GM10248 (cell line): ENCODE measurements at regions of chr14 and their contacts with region 1.

Region 1: GRCh38 chr14:20690848-20691523 is 2.4 kb downstream of the ANG start:
- DNase-seq: peak; percentile 69
- CTCF ChIP-seq: peak; percentile 76

Region 2: GRCh38 chr14:20568393-20568792 is 122.6 kb before region 1 on chr14:
- CTCF ChIA-PET with region 1: no interaction called
- POLR2A ChIA-PET with region 1: no interaction called
- DNase-seq: no peak
- CTCF ChIP-seq: no peak

Region 3: DNA sequence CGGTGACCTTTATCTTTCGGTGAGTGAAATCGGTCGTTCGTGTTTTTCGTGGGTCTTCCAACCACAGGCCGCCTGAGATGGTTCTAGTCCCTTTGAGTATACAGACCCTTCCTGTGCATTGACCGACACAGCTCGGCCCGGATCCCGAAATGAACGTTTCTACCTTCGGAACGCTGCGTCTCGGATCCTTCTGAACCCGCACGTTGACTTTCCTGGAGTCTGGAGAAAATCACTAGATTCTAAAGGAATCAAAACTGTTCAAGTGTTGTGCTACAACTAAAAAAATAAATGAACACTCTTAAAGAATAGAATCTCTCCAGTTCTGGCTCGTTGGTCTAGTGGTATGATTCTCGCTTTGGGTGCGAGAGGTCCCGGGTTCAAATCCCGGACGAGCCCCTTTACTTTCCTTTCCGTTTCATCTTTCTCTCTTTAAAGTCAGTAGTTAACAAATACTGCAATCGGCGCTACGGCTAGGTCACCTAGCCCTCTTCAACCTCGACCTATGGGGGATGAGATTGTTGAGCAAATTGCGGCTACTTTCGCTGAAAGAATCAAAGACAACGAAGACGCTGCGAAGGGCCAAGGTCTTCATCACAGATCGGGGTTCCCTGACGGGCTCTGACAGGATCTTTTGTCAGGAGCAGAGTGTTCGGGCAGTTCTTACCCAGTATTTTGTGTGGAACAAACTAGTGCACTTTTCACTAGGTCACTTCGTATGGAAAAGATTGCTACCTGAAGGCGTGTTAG is 58.1 kb before region 1 on chr14:
- CTCF ChIA-PET with region 1: interaction called, 10 read pairs
- POLR2A ChIA-PET with region 1: no interaction called
- DNase-seq: peak; percentile 81
- CTCF ChIP-seq: no peak

Region 4: DNA sequence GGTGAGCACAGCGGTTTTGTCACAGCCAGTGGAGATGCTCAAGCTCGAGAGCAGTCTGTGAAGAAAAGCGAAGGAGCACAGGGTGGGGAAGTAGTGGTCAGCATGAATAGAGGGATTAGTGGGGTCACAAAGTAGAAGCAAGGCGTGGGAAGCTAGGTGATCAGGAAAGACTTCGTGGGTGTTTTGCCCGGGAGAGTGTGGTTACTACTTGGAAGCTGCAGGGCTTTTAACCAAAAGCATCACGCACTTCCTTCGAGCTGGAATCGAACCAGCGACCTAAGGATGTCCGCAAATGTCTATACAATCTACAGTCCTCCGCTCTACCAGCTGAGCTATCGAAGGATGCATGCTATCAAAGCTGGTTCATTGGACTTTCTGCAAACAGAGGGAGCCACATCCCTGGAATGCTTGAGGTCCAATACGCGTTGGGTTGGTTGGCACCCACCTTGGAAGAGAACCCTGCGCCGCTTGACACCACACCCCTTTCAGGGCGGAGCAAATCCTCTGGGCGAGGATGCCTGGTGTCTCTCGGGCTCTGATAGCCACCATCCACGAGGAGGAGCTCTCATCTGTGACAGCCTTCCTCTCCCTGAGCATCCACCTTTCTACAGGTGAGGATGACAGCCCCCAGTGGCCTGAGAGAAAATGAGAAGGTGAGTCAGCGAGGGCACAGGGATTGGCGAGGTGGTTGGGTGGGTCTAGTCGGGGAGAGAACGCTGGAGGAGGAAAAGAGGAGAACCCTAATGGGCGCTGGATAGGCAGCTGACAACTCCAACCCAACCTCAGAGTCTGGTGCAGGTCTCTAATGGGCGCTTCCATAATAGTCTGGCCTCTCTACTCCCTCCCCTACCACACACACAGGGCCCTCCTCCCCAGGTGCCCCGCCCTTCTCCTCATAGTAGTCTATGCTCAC is 33.5 kb before region 1 on chr14:
- CTCF ChIA-PET with region 1: interaction called, 199 read pairs
- POLR2A ChIA-PET with region 1: no interaction called
- DNase-seq: no peak
- CTCF ChIP-seq: no peak

Region 5: GRCh38 chr14:20662968-20663732 is 27.8 kb before region 1 on chr14:
- CTCF ChIA-PET with region 1: interaction called, 199 read pairs
- POLR2A ChIA-PET with region 1: interaction called, 3 read pairs
- DNase-seq: peak; percentile 55
- CTCF ChIP-seq: peak; percentile 59

Region 6: DNA sequence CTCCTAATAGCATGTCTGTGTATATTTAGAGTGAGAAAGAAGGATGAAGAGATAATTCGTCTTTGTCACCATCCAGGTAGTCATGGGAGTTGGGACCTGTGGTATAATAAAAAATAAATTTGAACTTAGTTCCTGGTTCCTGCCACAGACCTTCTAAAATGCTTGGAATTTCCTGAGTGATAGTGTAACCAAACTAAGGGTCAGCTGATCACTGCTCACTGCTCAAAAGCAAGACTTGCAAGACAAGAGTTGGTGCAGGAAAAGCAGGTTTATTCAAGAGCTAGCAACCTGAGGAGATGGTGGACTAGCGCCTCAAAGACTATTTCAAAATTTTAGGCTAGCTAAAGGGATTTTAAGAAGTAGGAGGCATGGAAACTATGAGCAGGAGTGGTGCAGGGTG is 16.6 kb after region 1 on chr14:
- CTCF ChIA-PET with region 1: no interaction called
- POLR2A ChIA-PET with region 1: no interaction called
- DNase-seq: no peak
- CTCF ChIP-seq: no peak